H1 (cell line): ENCODE measurements at regions of chr10 and their contacts with region 1.

Region 1: GRCh38 chr10:91643700-91644099 is 10.8 kb upstream of the PPP1R3C start:
- DNase-seq: peak in 1 of 2 experiments; percentile 51
- H3K4me3 ChIP-seq: no peak overlapping the region
- H3K27ac ChIP-seq: no peak overlapping the region
- H3K4me1 ChIP-seq: no peaks in the 10 kb centered on the region
- H3K27me3 ChIP-seq: no peaks in the 10 kb centered on the region
- CTCF ChIP-seq: peak; percentile 63 to 71 (median 65)
- EP300 ChIP-seq: no peak
- POLR2A ChIP-seq: no peak
- RAD21 ChIP-seq: peak; percentile 55 to 66

Region 2: GRCh38 chr10:91683975-91684374 is 40.3 kb after region 1 on chr10:
- CTCF ChIA-PET with region 1: interaction called, 13 read pairs
- POLR2A ChIA-PET with region 1: no interaction called
- DNase-seq: peak in 1 of 2 experiments; percentile 36
- H3K4me3 ChIP-seq: 0 out of 8 replicates have a peak overlapping the region, but pooled peaks of 1 of the 4 experiments have one; percentile 1
- H3K27ac ChIP-seq: no peak overlapping the region
- H3K4me1 ChIP-seq: peaks cover 4 to 20% (median 6%) of the 10 kb centered on the region in 4 experiments
- H3K27me3 ChIP-seq: no peaks in the 10 kb centered on the region
- CTCF ChIP-seq: no peak
- EP300 ChIP-seq: no peak
- POLR2A ChIP-seq: no peak
- RAD21 ChIP-seq: no peak